ENCODE measurements at regions of chr1 and their contacts with region 1.

Region 1: DNA sequence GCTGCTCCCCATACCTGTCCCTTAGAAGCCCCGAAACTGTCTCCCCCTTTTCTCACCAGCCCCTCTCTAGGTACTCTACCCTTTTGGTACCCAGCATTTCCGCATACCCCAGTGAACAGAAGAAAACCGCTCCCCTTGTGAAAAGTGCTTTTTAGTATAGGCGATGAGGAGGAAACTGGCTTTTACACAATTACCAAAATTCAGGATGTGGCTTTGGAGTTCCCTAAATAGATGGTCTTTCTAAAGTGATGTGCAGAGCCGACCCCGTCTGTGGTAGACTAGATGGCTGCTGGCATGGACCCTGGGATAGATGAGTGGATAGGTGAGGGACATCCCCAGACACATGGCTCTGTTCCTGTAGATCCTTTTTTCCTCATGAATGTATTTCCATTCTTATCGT is 2.6 kb upstream of the PER3 start:
- DNase-seq: no peak
- H3K4me3 ChIP-seq: no peak overlapping the region
- H3K27ac ChIP-seq: no peak overlapping the region
- H3K4me1 ChIP-seq: peaks cover 0 to 6% (median 0%) of the 10 kb centered on the region in 4 experiments; a peak in 2 of 7 replicates
- H3K27me3 ChIP-seq: peaks cover 0 to 8% (median 7%) of the 10 kb centered on the region in 4 experiments; a peak in 5 of 7 replicates
- CTCF ChIP-seq: no peak
- EP300 ChIP-seq: no peak
- POLR2A ChIP-seq: no peak
- RAD21 ChIP-seq: no peak

Region 2: GRCh38 chr1:7770997-7771822 is 10.3 kb before region 1 on chr1 and contains the start of gene VAMP3:
- CTCF ChIA-PET with region 1: interaction called, 4 read pairs
- POLR2A ChIA-PET with region 1: interaction called, 10 read pairs
- DNase-seq: peak; percentile 56 to 97
- H3K4me3 ChIP-seq: peak within 1 kb of the TSS; percentile 83 to 99 (median 88)
- H3K27ac ChIP-seq: peak within 1 kb of the TSS; percentile 79
- H3K4me1 ChIP-seq: peaks cover 0 to 6% (median 2%) of the 10 kb centered on the region in 4 experiments; a peak in 5 of 7 replicates
- H3K27me3 ChIP-seq: no peaks in the 10 kb centered on the region; a peak in 1 of 7 replicates
- CTCF ChIP-seq: no peak
- EP300 ChIP-seq: no peak
- POLR2A ChIP-seq: no peak
- RAD21 ChIP-seq: no peak
- total RNA-seq, gene VAMP3: 36.7 and 41.2 TPM in 2 replicates

Measured in H1 (cell line).